ENCODE measurements at regions of chr12 and their contacts with region 1.

Region 1: GRCh38 chr12:14365294-14366208 is at the start of gene ATF7IP:
- DNase-seq: peak; percentile 97
- H3K4me3 ChIP-seq: peak within 1 kb of the TSS; percentile 49 to 78 (median 62)
- H3K27ac ChIP-seq: peak within 1 kb of the TSS; percentile 91 to 98 (median 96)
- H3K4me1 ChIP-seq: peaks cover 0 to 26% (median 13%) of the 10 kb centered on the region in 4 donors
- H3K27me3 ChIP-seq: no peaks in the 10 kb centered on the region
- CTCF ChIP-seq: peak in 2 of 5 experiments; percentile 14 to 30
- EP300 ChIP-seq: no peak
- POLR2A ChIP-seq: peak; percentile 89
- total RNA-seq, gene ATF7IP: 32.2 to 159 (median 85.3) TPM

Region 2: GRCh38 chr12:14243931-14244652 is 121.5 kb before region 1 on chr12:
- in situ Hi-C with region 1: no loop called
- intact Hi-C with region 1: no loop called
- DNase-seq: no peak
- H3K4me3 ChIP-seq: no peak overlapping the region
- H3K27ac ChIP-seq: no peak overlapping the region
- H3K4me1 ChIP-seq: peaks cover 0 to 8% (median 2%) of the 10 kb centered on the region in 4 donors
- H3K27me3 ChIP-seq: no peaks in the 10 kb centered on the region
- CTCF ChIP-seq: no peak
- EP300 ChIP-seq: no peak
- POLR2A ChIP-seq: no peak

Region 3: DNA sequence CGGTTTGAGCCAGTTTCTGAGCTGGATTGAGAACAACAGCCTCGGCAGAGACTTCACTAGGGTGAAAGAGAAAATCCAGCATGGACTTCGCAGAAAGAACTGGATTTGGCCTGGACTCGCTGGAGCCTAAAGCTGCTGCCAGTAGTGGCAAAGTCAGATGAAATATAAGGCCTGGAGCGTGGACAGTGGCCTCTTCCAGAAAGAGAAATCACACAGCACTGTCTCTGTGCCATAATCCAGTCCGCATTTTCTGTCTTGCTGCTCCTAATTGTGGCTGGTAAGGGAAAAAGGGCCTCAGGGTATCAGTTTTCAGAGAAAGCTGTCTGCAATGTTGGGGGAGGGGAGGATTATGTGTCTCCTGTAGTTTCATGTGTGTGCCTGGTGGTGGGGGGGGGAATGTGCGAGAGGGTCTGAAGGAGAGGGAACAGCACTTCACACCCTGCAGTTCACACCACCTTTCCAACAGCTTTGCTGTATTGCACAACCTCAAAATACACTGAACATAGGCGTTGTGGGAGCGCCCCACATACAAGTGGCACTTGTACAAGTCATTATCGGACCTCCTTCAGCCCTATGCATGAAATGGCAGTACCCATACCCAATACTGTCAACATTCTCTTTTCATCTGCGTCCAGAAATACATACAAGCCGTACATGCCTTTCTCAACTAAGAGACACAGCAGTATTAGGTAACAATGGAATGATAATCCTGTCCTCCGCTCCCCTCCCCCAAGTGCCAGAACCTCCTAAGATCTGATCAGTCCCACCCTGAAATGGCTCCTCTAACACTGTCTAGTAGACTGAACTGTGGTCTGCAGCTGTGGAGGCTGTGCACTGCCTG is 107.6 kb before region 1 on chr12:
- in situ Hi-C with region 1: loop called (anchors 5 to 25 kb)
- intact Hi-C with region 1: loop called (anchors 5 kb)
- DNase-seq: peak; percentile 94
- H3K4me3 ChIP-seq: peak overlapping the region in 1 of 4 donors; percentile 13
- H3K27ac ChIP-seq: peak overlapping the region; percentile 81 to 89 (median 86)
- H3K4me1 ChIP-seq: peaks cover 22 to 56% (median 36%) of the 10 kb centered on the region in 4 donors
- H3K27me3 ChIP-seq: no peaks in the 10 kb centered on the region
- CTCF ChIP-seq: no peak
- EP300 ChIP-seq: peak; percentile 70
- POLR2A ChIP-seq: no peak